Right lobe of liver (tissue), 6 donors: ENCODE measurements at regions of chr17 and their contacts with region 1.

Region 1: GRCh38 chr17:17859909-17860765 is 23.4 kb upstream of the SREBF1 start:
- DNase-seq: peak; percentile 89 to 96 (median 95)
- ATAC-seq: peak; percentile 89 to 97 (median 94)
- H3K4me3 ChIP-seq: no peak overlapping the region
- H3K27ac ChIP-seq: peak overlapping the region in 2 of 3 donors; percentile 42 to 64
- H3K4me1 ChIP-seq: peaks cover 0 to 14% (median 5%) of the 10 kb centered on the region in 4 donors
- H3K27me3 ChIP-seq: no peaks in the 10 kb centered on the region
- CTCF ChIP-seq: peak; percentile 97 to 99 (median 98)
- POLR2A ChIP-seq: peak; percentile 13

Region 2: GRCh38 chr17:17675925-17676534 is 184.1 kb before region 1 on chr17:
- intact Hi-C with region 1: loop called (anchors 10 kb)
- DNase-seq: no peak
- ATAC-seq: no peak
- H3K4me3 ChIP-seq: no peak overlapping the region
- H3K27ac ChIP-seq: no peak overlapping the region
- H3K4me1 ChIP-seq: no peaks in the 10 kb centered on the region
- H3K27me3 ChIP-seq: no peaks in the 10 kb centered on the region
- CTCF ChIP-seq: no peak
- POLR2A ChIP-seq: no peak

Region 3: GRCh38 chr17:17681187-17681848 is 178.8 kb before region 1 on chr17 and contains the start of gene RAI1:
- intact Hi-C with region 1: loop called (anchors 10 kb)
- DNase-seq: peak; percentile 81 to 84 (median 82)
- ATAC-seq: peak; percentile 71 to 89 (median 80)
- H3K4me3 ChIP-seq: peak within 1 kb of the TSS; percentile 62 to 71 (median 64)
- H3K27ac ChIP-seq: peak within 1 kb of the TSS; percentile 77 to 82 (median 82)
- H3K4me1 ChIP-seq: peaks cover 0 to 8% (median 3%) of the 10 kb centered on the region in 4 donors
- H3K27me3 ChIP-seq: no peaks in the 10 kb centered on the region
- CTCF ChIP-seq: peak; percentile 53 to 97 (median 76)
- POLR2A ChIP-seq: peak; percentile 59
- total RNA-seq, gene RAI1: 6.1 to 14.5 (median 8.4) TPM

Region 4: DNA sequence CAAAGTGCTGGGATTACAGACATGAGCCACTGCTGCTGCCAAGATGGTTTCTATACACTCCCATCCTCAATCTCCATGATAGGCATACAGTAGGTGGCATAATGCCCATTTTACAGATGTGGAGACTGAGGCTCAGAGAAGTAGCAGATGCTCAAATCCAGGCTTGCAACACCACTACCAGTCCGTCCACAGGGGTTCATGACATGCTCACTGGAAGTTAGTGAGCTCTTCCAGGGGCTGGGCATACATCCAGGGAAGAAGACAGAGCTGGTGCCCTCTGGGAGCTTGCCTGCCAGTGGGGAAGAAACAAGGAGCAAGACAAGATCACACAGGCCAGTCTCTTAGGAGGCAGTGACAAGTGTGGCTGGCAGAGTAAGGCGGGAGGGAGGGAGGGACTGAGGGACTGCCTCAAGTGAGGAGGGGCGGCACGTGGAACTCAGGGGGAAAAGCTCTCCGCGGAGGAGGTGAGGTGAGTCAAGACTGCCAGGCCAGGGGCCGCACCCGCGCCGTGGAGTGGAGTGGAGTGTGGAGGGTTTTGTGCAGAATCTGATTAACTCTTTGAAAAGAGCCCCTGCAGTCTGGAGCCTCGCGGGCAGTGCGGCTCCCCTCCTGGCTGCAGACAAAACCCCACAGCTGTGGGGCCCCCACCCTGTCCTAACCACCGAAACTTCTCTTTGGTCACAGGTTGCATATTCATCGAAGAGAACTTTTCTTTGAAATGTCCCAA is 51.3 kb before region 1 on chr17:
- intact Hi-C with region 1: no loop called
- DNase-seq: peak in 1 of 3 donors; percentile 72
- ATAC-seq: no peak
- H3K4me3 ChIP-seq: no peak overlapping the region
- H3K27ac ChIP-seq: no peak overlapping the region
- H3K4me1 ChIP-seq: peaks cover 0 to 60% (median 15%) of the 10 kb centered on the region in 4 donors
- H3K27me3 ChIP-seq: no peaks in the 10 kb centered on the region
- CTCF ChIP-seq: no peak
- POLR2A ChIP-seq: no peak

Region 5: GRCh38 chr17:17819561-17819995 is 40.6 kb before region 1 on chr17:
- intact Hi-C with region 1: loop called in 1 of 2 experiments (anchors 5 kb)
- DNase-seq: peak; percentile 87 to 91 (median 87)
- ATAC-seq: peak; percentile 31 to 53 (median 36)
- H3K4me3 ChIP-seq: peak overlapping the region in 1 of 3 donors; percentile 70
- H3K27ac ChIP-seq: peak overlapping the region; percentile 15 to 84 (median 43)
- H3K4me1 ChIP-seq: peaks cover 0 to 70% (median 19%) of the 10 kb centered on the region in 4 donors
- H3K27me3 ChIP-seq: no peaks in the 10 kb centered on the region
- CTCF ChIP-seq: no peak
- POLR2A ChIP-seq: peak; percentile 24

Region 6: GRCh38 chr17:17913695-17914332 is 53.7 kb after region 1 on chr17:
- intact Hi-C with region 1: no loop called
- DNase-seq: peak in 1 of 3 donors; percentile 64
- ATAC-seq: peak; percentile 46 to 97 (median 75)
- H3K4me3 ChIP-seq: no peak overlapping the region
- H3K27ac ChIP-seq: no peak overlapping the region
- H3K4me1 ChIP-seq: peaks cover 0 to 14% (median 5%) of the 10 kb centered on the region in 4 donors
- H3K27me3 ChIP-seq: no peaks in the 10 kb centered on the region
- CTCF ChIP-seq: no peak
- POLR2A ChIP-seq: no peak

Region 7: GRCh38 chr17:18008496-18009268 is 148.5 kb after region 1 on chr17:
- intact Hi-C with region 1: no loop called
- DNase-seq: no peak
- ATAC-seq: no peak
- H3K4me3 ChIP-seq: no peak overlapping the region
- H3K27ac ChIP-seq: no peak overlapping the region
- H3K4me1 ChIP-seq: no peaks in the 10 kb centered on the region
- H3K27me3 ChIP-seq: no peaks in the 10 kb centered on the region
- CTCF ChIP-seq: no peak
- POLR2A ChIP-seq: no peak